ENCODE measurements at regions of chr12 and their contacts with region 1.

Region 1: GRCh38 chr12:49130151-49131050 is 794 bp downstream of the TUBA1B start:
- DNase-seq: peak; percentile 93
- ATAC-seq: peak; percentile 65
- H3K4me3 ChIP-seq: peak overlapping the region; percentile 82
- H3K27ac ChIP-seq: peak overlapping the region; percentile 89
- H3K4me1 ChIP-seq: peaks cover 7% of the 10 kb centered on the region
- H3K27me3 ChIP-seq: no peaks in the 10 kb centered on the region
- CTCF ChIP-seq: peak; percentile 97
- POLR2A ChIP-seq: peak; percentile 81
- RAD21 ChIP-seq: peak; percentile 50

Region 2: GRCh38 chr12:49188914-49189367 is 58.5 kb after region 1 on chr12 and contains the start of gene TUBA1A:
- CTCF ChIA-PET with region 1: interaction called, 6 read pairs
- POLR2A ChIA-PET with region 1: interaction called, 8 read pairs
- dilution Hi-C with region 1: no loop called
- in situ Hi-C with region 1: loop called (anchors 10 kb)
- intact Hi-C with region 1: loop called (anchors 2 kb)
- DNase-seq: peak; percentile 100
- ATAC-seq: peak; percentile 94
- H3K4me3 ChIP-seq: peak within 1 kb of the TSS; percentile 67
- H3K27ac ChIP-seq: peak within 1 kb of the TSS; percentile 66
- H3K4me1 ChIP-seq: no peaks in the 10 kb centered on the region; the same call in 1 of the 2 replicates
- H3K27me3 ChIP-seq: no peaks in the 10 kb centered on the region
- CTCF ChIP-seq: no peak
- POLR2A ChIP-seq: peak; percentile 99
- RAD21 ChIP-seq: no peak
- total RNA-seq, gene TUBA1A: 2,389 and 2,832 TPM in 2 replicates

Region 3: GRCh38 chr12:49223590-49224369 is 93.4 kb after region 1 on chr12:
- CTCF ChIA-PET with region 1: interaction called, 3 read pairs
- POLR2A ChIA-PET with region 1: interaction called, 10 read pairs
- dilution Hi-C with region 1: no loop called
- in situ Hi-C with region 1: no loop called
- intact Hi-C with region 1: no loop called
- DNase-seq: no peak
- ATAC-seq: no peak
- H3K4me3 ChIP-seq: no peak overlapping the region
- H3K27ac ChIP-seq: no peak overlapping the region; the same call in 1 of the 2 replicates
- H3K4me1 ChIP-seq: peaks cover 4% of the 10 kb centered on the region
- H3K27me3 ChIP-seq: no peaks in the 10 kb centered on the region
- CTCF ChIP-seq: no peak
- POLR2A ChIP-seq: no peak
- RAD21 ChIP-seq: no peak

Region 4: GRCh38 chr12:49232940-49233841 is 102.8 kb after region 1 on chr12:
- CTCF ChIA-PET with region 1: interaction called, 10 read pairs
- POLR2A ChIA-PET with region 1: interaction called, 8 read pairs
- dilution Hi-C with region 1: no loop called
- in situ Hi-C with region 1: no loop called
- intact Hi-C with region 1: loop called (anchors 1 kb)
- DNase-seq: peak; percentile 56
- ATAC-seq: peak; percentile 68
- H3K4me3 ChIP-seq: peak overlapping the region; percentile 25
- H3K27ac ChIP-seq: peak overlapping the region; percentile 88
- H3K4me1 ChIP-seq: peaks cover 16% of the 10 kb centered on the region
- H3K27me3 ChIP-seq: no peaks in the 10 kb centered on the region
- CTCF ChIP-seq: peak; percentile 29; the same call in 1 of the 2 replicates
- POLR2A ChIP-seq: no peak
- RAD21 ChIP-seq: peak; percentile 25; the same call in 1 of the 2 replicates

Region 5: GRCh38 chr12:49264738-49265515 is 134.5 kb after region 1 on chr12 and contains the start of gene TUBA1C:
- CTCF ChIA-PET with region 1: no interaction called
- POLR2A ChIA-PET with region 1: interaction called, 3 read pairs
- dilution Hi-C with region 1: no loop called
- in situ Hi-C with region 1: no loop called
- intact Hi-C with region 1: loop called (anchors 10 kb)
- DNase-seq: peak; percentile 90
- ATAC-seq: peak; percentile 85
- H3K4me3 ChIP-seq: peak within 1 kb of the TSS; percentile 77
- H3K27ac ChIP-seq: peak within 1 kb of the TSS; percentile 94
- H3K4me1 ChIP-seq: peaks cover 21% of the 10 kb centered on the region
- H3K27me3 ChIP-seq: no peaks in the 10 kb centered on the region
- CTCF ChIP-seq: no peak
- POLR2A ChIP-seq: peak; percentile 99
- RAD21 ChIP-seq: no peak
- total RNA-seq, gene TUBA1C: 1,144 and 1,420 TPM in 2 replicates